Ascending aorta (tissue), 2 donors: ENCODE measurements at regions of chr6 and their contacts with region 1.

Region 1: DNA sequence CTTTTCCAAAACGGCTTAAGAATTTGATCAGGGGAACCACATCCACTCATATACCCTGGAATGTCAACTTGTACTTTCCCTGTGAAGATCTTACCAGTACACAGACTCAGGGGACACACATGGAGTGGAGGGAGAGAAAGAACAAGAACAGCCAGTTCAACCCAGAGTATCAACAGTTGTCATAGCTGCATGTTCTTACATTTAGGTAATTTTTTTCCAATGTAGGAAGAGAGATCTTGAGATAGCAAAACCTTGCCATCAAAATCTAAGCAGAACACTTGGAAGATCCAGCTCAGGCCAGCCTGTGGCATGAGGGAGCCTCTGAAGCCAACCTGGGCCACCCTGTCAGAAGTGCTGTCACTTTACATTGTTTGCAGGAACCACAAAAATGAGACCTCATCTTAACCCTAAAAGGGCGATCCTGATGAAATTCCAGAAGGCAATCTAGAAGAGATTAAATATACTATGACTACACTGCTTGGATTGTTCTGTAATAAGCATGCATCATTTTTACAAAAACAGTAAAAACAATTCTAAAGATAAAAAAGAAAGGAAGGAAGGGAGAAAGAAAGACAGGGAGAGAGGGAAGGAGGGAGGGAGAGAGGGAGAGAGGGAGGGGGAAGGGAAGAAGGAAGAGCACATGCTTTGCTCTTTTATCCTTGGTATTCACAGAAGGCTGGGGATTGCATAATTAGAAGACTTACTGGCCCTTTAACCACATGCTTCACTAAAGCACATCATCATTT is 124.7 kb upstream of the TCF21 start:
- DNase-seq: no peak
- H3K4me3 ChIP-seq: no peak overlapping the region
- H3K27ac ChIP-seq: peak overlapping the region; percentile 47 to 70
- H3K4me1 ChIP-seq: peaks cover 7 to 38% of the 10 kb centered on the region in 2 donors
- H3K27me3 ChIP-seq: no peaks in the 10 kb centered on the region
- CTCF ChIP-seq: no peak

Region 2: DNA sequence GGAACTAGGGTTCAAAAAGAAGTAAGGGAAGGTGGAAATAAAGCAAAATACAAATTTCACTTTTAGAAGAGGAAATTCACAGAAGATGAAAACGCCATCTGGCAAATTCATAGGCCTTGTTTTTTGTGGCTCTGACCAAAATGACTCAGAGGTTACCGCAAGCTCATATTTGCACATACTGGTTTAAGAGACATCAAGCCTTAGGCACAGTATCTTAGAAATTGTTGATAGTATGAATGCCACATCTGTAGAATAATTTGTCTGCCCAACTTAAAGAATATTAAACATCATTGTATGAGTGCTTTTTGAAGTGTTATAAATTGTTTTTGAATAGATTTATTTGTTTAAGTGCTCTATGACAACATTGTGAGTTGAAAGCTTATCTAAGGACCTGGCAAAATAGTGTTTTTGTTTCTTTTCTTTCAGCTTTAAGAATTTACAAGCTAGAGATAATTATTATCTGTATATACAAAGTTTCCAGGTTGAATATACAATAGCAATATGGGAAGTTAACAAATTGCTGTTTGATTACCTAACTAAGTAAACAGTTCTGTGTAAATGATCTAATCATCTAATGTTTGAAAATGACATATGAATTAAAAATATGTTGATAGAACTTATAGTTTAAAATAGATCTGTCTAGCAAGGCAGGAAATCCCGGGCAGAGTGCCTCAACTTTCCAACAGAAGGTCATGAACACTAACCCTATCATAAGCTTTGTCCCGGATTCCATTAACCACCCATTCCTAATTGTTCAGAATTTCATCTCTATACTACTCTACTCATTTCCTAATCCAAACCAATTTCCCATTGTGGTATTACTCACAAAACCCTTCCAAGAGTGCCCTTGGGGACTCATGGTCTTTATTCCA is 1115.6 kb before region 1 on chr6:
- intact Hi-C with region 1: no loop called
- DNase-seq: no peak
- H3K4me3 ChIP-seq: no peak overlapping the region
- H3K27ac ChIP-seq: peak overlapping the region in 1 of 2 donors; percentile 48
- H3K4me1 ChIP-seq: peaks cover 0 to 5% of the 10 kb centered on the region in 2 donors
- H3K27me3 ChIP-seq: no peaks in the 10 kb centered on the region
- CTCF ChIP-seq: no peak

Region 3: DNA sequence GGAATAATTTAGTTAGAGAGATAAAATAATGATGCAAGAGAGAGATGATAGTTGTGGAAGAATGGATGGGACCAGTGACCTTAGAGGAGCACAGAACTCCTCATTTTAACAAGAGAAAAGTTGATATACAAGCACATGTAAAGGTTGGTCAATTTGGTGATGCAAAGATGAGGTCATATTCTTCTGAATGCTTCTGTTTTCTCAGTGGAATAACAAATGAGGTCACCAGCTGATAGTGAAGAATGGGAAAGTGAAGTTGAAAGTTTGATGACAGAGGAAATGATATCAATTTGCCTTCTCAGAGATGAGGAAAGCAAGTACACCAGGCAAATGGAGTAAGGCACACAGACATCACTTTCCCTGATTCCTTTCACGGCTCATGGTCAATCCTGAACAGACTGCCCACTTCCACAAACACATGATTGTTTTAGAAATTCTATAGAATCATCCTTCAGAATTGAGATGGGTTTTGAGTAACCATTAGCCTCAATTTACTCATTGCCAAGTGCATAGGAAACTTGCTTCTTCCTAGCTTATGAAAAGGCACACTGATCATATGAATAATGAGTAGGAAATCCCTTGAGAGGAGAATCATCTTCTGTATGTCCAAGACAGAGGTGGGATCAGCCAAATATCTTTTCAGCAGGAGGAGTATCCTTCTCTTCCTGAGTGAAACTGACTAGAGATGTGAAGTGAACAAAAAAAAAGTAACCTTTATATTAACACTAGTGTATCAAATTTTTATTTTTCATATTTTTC is 42.4 kb after region 1 on chr6:
- intact Hi-C with region 1: loop called (anchors 5 kb)
- DNase-seq: no peak
- H3K4me3 ChIP-seq: no peak overlapping the region
- H3K27ac ChIP-seq: peak overlapping the region in 1 of 2 donors; percentile 2
- H3K4me1 ChIP-seq: peaks cover 0 to 9% of the 10 kb centered on the region in 2 donors
- H3K27me3 ChIP-seq: no peaks in the 10 kb centered on the region
- CTCF ChIP-seq: no peak

Region 4: DNA sequence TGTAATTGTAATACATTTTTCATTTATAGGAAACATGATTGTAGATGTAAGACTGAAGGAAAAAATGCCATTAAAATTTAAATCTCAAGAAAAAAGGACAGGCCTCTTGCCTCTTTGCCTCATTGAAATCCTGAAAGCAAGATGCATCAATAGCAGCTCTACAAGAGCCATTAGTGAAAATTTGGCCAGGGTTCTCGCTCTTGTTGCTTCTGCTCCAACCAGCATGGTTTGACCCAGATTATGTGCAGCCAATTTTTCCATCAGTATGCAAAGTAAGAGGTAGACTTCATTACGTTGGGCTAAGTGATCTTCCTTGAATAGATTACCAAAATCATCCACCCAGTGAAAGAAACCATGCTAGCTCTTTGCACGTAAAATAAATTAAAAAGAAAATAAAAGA is 447.1 kb after region 1 on chr6:
- intact Hi-C with region 1: no loop called
- DNase-seq: no peak
- H3K4me3 ChIP-seq: no peak overlapping the region
- H3K27ac ChIP-seq: no peak overlapping the region
- H3K4me1 ChIP-seq: no peaks in the 10 kb centered on the region
- H3K27me3 ChIP-seq: no peaks in the 10 kb centered on the region
- CTCF ChIP-seq: no peak